Ovary (tissue), 10 donors: ENCODE measurements at regions of chr7 and their contacts with region 1.

Region 1: DNA sequence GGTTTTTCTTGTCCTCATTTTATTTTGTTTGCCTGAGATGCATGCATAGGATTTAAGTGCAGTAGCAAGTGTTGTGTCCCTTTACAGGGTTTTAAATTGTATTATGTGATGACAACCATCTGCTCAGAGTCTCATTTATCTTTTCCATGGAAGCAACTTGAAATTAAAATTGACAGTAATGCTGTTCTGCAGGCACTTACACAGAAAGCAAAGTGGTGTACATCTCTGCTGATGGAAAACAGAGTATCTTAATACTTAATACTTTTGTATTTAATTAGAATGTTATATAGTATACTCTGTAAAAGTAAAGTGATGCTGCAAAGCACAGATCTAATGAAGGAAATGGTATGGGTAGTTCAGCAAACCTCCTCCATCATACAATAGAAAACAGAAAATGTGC is 482.9 kb downstream of the POM121L12 start:
- DNase-seq: no peak
- H3K4me3 ChIP-seq: no peak overlapping the region
- H3K27ac ChIP-seq: no peak overlapping the region
- H3K4me1 ChIP-seq: no peaks in the 10 kb centered on the region
- H3K27me3 ChIP-seq: no peaks in the 10 kb centered on the region
- CTCF ChIP-seq: no peak
- EP300 ChIP-seq: no peak
- POLR2A ChIP-seq: no peak

Region 2: DNA sequence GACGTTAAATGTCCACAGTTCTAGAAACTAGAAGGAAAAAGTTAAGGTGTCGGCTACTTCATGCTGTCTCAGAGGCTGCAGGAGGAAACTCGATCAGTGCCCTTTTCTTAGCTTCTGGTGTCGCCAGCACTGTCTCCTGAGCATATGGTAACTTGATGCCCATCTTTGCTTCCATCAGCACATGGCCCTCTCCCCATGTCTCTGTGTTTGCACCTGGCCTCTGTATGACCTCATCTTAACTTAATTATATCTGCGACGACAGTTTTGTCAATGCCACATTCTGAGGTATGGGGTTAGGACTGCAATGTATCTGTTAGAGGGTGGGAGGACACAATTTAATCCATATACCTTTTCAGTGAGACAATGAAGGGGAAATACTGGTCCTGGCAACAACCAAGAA is 33.0 kb before region 1 on chr7:
- intact Hi-C with region 1: loop called in 1 of 4 experiments (anchors 1 kb)
- DNase-seq: no peak
- H3K4me3 ChIP-seq: no peak overlapping the region
- H3K27ac ChIP-seq: no peak overlapping the region
- H3K4me1 ChIP-seq: no peaks in the 10 kb centered on the region
- H3K27me3 ChIP-seq: no peaks in the 10 kb centered on the region
- CTCF ChIP-seq: no peak
- EP300 ChIP-seq: no peak
- POLR2A ChIP-seq: no peak